Motor neuron (in vitro differentiated cells): ENCODE measurements at regions of chr15 and their contacts with region 1.

Region 1: DNA sequence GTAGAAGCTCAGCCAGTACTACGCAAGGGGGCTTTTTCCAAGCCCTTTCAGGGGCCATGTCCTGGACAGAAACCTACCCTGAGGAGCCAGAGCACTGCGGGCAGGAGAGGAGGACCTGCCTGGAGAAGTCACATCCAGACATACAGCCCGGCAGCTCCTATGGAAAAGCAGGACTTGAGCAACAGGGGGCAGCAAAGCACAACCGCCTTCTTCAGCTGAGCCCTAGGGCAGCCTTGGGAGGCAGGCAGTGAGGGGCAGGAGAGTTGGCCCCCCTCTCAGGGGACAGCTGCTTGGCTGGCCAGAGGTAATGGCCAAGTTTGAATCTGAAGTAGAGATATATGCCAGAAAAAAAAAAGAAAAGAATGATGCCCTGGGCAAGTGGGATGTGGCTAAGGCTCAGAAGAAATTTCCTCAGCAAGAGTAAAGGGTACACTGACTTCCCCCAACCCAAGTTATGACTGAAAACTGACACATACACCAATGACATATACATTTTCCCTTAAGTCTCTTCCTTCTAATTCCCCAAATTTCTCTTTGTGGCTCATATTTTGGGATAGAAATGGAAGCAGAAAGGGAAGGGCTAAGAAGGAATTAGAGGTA is 56.9 kb downstream of the CYP19A1 start:
- ATAC-seq: peak in 5 of 8 experiments; percentile 40 to 99 (median 97)
- H3K4me3 ChIP-seq: no peak overlapping the region
- H3K27ac ChIP-seq: no peak overlapping the region
- H3K4me1 ChIP-seq: peaks cover 9 to 13% of the 10 kb centered on the region in 2 donors

Region 2: DNA sequence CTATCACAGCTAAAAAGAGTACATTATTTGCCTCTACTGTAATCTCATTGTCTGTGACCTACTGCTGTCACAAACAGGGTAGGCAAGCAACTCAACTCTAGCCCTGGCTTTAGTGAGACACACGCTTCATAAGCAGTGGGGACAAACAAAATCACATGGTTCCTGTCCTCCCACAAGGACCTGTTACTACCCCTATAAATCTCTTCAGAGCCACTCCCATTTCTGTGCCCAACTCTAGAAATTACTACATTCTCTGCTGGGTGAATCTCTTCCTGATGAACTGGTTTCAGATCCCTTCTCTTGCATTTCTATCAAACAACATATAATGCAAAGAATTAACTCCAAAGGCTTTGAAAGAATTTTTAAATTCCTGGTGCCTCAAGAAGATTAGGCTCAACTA is 223.8 kb after region 1 on chr15:
- in situ Hi-C with region 1: loop called in 1 of 9 experiments (anchors 25 kb)
- ATAC-seq: no peak
- H3K4me3 ChIP-seq: no peak overlapping the region
- H3K27ac ChIP-seq: no peak overlapping the region
- H3K4me1 ChIP-seq: no peaks in the 10 kb centered on the region